Activated CD8-positive, alpha-beta T cell treated with anti-CD3 and anti-CD28 coated beads, Interleukin-2, amount 10 ng/mL, durations not matched to agents 7 days and 5 days (primary cell): ENCODE measurements at regions of chr2 and their contacts with region 1.

Region 1: GRCh38 chr2:218659258-218659987 is at the starts of genes BCS1L and ZNF142:
- DNase-seq: peak; percentile 97
- ATAC-seq: peak; percentile 96
- H3K4me3 Mint-ChIP-seq: peak within 1 kb of the TSS; percentile 90
- H3K27ac Mint-ChIP-seq: peak within 1 kb of the TSS; percentile 90
- H3K4me1 Mint-ChIP-seq: peaks cover 31% of the 10 kb centered on the region
- H3K27me3 Mint-ChIP-seq: no peaks in the 10 kb centered on the region
- total RNA-seq, gene BCS1L: 50.1 to 50.5 TPM
- total RNA-seq, gene ZNF142: 49.2 to 53.1 TPM

Region 2: DNA sequence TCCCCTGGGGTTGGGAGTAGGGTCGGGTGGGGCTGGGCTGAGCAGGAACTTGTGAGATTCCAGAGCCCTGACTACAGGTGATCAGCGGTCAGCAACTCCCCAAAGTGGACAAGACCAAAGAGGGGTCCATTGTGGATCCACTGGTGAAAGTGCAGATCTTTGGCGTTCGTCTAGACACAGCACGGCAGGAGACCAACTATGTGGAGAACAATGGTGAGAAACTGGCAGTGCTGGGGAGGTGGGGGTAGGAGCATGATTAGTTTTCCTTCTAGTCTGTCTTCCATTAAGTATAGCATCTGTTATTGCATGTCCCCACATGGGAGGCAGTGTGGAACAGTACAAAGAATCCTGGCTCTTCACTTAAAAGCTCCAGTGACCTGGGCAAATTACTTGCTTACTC is 23.7 kb before region 1 on chr2:
- CTCF ChIA-PET with region 1: no interaction called
- POLR2A ChIA-PET with region 1: no interaction called
- DNase-seq: no peak
- ATAC-seq: no peak
- H3K4me3 Mint-ChIP-seq: no peak overlapping the region
- H3K27ac Mint-ChIP-seq: no peak overlapping the region
- H3K4me1 Mint-ChIP-seq: no peaks in the 10 kb centered on the region
- H3K27me3 Mint-ChIP-seq: no peaks in the 10 kb centered on the region

Region 3: GRCh38 chr2:218648088-218648786 is 11.2 kb before region 1 on chr2:
- CTCF ChIA-PET with region 1: interaction called, 32 read pairs
- POLR2A ChIA-PET with region 1: interaction called, 3 read pairs
- DNase-seq: peak; percentile 69
- ATAC-seq: peak; percentile 87
- H3K4me3 Mint-ChIP-seq: no peak overlapping the region
- H3K27ac Mint-ChIP-seq: no peak overlapping the region
- H3K4me1 Mint-ChIP-seq: peaks cover 3% of the 10 kb centered on the region
- H3K27me3 Mint-ChIP-seq: no peaks in the 10 kb centered on the region

Region 4: GRCh38 chr2:218691234-218691633 is 31.8 kb after region 1 on chr2:
- CTCF ChIA-PET with region 1: interaction called, 24 read pairs
- POLR2A ChIA-PET with region 1: no interaction called
- DNase-seq: no peak
- ATAC-seq: no peak
- H3K4me3 Mint-ChIP-seq: no peak overlapping the region
- H3K27ac Mint-ChIP-seq: no peak overlapping the region
- H3K4me1 Mint-ChIP-seq: peaks cover 2% of the 10 kb centered on the region
- H3K27me3 Mint-ChIP-seq: no peaks in the 10 kb centered on the region